ENCODE measurements at regions of chr4 and their contacts with region 1.

Region 1: DNA sequence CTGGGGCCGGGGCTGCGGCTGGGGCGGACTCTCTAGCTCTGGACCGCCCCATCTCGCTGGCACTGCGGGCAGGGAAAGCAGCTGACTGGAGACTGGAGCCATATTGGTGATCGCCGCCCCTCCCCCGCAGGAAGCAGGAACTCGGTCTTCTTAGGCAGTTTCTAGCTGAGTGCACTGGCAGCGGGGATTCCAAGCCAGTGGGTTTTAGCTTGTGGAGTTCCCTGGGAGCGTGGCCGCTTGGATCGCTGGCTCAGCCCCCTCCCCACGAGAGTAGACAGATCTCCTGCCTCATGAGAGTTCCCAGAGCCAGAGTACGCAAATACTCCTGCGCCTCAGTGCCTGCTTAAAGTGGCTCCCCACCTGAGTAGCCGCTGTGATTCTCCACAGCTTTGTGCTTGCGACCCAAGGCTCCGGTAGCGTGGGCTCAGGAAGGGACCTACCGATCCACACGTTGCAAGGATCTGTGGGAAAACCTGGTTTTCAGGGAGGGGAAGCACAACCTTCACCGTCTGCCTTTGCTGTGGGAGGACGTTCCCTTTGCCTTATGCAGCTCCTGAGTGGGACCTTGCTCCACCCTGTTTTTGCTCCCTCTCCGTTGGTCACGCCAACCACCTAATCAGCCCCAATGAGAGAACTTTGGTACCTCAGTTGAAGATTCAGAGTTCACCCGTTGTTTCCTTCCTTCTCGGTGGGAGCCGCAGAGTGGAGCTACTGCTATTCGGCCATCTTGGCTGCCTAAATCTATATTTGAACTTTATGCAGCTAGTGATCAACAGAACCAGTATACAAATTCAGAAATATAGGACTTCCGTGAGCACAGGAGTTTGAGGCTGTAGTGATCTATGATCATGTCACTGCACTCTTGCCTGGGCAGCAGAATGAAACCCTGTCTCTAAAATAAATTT is 803.9 kb upstream of the PCDH10 start:
- DNase-seq: no peak
- H3K4me3 ChIP-seq: no peak overlapping the region
- H3K27ac ChIP-seq: no peak overlapping the region
- H3K4me1 ChIP-seq: no peaks in the 10 kb centered on the region
- H3K27me3 ChIP-seq: no peaks in the 10 kb centered on the region
- CTCF ChIP-seq: no peak
- EP300 ChIP-seq: no peak
- POLR2A ChIP-seq: no peak
- RAD21 ChIP-seq: no peak

Region 2: DNA sequence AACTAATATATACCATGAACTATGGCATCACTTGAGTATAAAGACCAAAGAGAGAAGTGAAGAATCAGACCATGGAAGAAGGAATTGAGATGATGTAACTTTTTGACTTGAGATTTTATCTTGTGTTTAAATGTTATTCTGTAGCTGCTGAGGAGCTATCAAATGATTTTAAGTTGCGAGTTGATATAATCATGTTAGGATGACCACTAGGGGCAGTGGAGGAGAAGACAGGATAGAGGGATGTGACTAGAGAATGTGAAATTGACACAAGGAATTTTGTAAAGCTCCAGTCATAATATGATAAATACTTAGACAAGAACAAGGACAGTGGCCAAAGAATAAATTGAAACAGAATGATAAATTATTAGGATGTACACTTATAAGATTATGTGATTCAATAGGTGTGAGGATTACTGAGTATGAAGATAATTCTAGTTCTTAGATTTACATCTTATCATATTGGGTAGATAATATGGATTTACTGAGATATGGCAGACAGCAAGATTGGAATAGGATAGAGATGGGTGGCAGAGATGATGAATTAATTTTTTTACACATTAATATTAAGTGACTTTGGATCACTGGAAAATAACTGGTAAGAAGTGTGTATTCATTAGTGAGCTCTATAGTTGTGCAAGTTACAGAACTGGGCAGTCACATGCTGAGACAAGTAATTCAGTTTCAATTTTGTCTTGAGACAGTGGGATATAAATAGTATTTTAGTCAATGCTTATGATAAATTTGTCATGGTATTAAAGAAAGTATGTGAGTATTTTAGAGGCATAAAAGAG is 12.0 kb before region 1 on chr4:
- CTCF ChIA-PET with region 1: interaction called, 10 read pairs
- POLR2A ChIA-PET with region 1: no interaction called
- DNase-seq: no peak
- H3K4me3 ChIP-seq: no peak overlapping the region
- H3K27ac ChIP-seq: no peak overlapping the region
- H3K4me1 ChIP-seq: no peaks in the 10 kb centered on the region
- H3K27me3 ChIP-seq: no peaks in the 10 kb centered on the region
- CTCF ChIP-seq: peak in 2 of 3 experiments; percentile 26 to 41; a peak in 2 of 4 replicates
- EP300 ChIP-seq: no peak
- POLR2A ChIP-seq: no peak
- RAD21 ChIP-seq: peak; percentile 41 to 49

Region 3: DNA sequence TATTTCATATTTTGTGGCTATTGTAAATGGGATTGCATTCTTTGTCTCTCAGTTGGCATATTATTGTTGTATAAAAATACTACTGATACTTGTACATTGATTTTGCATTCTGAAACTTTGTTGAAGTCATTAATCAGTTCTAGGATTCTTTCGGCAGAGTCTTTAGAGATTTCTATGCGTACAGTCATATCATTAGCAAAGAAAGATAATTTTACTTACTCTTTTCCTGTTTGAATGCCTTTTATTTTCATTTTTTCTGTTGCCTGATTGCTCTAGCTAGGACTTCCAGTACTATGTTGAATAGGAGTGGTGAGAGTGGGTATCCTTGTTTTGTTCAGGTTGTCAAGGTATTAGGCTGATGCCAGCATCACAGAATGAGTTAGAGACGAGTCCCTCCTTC is 81.9 kb after region 1 on chr4:
- CTCF ChIA-PET with region 1: no interaction called
- POLR2A ChIA-PET with region 1: no interaction called
- DNase-seq: no peak
- H3K4me3 ChIP-seq: no peak overlapping the region
- H3K27ac ChIP-seq: no peak overlapping the region
- H3K4me1 ChIP-seq: no peaks in the 10 kb centered on the region
- H3K27me3 ChIP-seq: no peaks in the 10 kb centered on the region
- CTCF ChIP-seq: no peak
- EP300 ChIP-seq: no peak
- POLR2A ChIP-seq: no peak
- RAD21 ChIP-seq: no peak

Measured in H1 (cell line).